Caco-2 (cell line): ENCODE measurements at regions of chr18 and their contacts with region 1.

Region 1: DNA sequence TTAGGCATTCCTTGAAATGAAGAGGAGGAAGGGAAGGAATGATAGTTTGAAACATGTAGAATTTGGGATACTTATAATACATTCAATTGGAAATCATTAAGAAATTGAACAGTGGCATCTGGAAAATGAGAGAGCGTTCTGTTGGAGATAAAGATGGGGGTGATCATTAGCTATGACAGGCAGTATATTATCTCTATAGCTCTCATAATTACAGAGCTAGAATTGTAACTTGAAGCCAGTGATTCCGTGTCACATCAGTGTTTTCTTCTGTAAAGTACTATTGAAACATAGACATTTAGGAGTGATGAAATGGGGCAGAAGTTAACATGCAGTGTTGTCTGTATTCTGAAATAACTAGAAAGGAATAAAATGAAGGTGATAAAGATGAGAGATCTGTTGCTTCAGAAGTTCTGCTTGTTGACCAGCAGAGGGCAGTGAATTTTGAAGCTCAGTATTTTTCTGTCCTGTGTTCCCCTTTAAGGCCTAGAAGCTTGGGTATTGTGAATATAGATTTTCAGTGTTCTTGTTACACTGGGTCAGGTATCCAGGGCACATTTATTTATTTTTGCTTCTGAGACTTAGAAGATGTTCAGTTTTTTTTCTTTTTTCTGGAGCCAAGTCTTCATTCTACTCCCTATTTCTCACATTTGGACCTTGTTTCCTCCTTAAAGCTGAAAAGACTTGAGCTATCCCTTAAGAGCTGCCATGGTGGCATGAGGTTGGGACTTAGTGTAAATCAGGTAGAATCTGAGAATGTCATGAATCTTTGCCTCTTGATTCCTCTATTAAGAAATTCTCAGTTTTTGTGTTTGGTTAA is 157.4 kb downstream of the TAF4B start:
- DNase-seq: peak in 1 of 2 experiments; percentile 12
- H3K4me3 ChIP-seq: no peak overlapping the region
- H3K4me3 Mint-ChIP-seq: no peak overlapping the region
- H3K27ac Mint-ChIP-seq: no peak overlapping the region
- H3K4me1 ChIP-seq: peaks cover 12% of the 10 kb centered on the region; the same call in 1 of the 2 replicates
- H3K4me1 Mint-ChIP-seq: no peaks in the 10 kb centered on the region
- H3K27me3 ChIP-seq: no peaks in the 10 kb centered on the region
- H3K27me3 Mint-ChIP-seq: no peaks in the 10 kb centered on the region
- CTCF ChIP-seq: peak; percentile 43 to 53

Region 2: GRCh38 chr18:26468931-26469340 is 85.3 kb after region 1 on chr18:
- CTCF ChIA-PET with region 1: no interaction called
- POLR2A ChIA-PET with region 1: no interaction called
- intact Hi-C with region 1: loop called (anchors 10 kb)
- DNase-seq: peak; percentile 62 to 64
- H3K4me3 ChIP-seq: no peak overlapping the region
- H3K4me3 Mint-ChIP-seq: no peak overlapping the region
- H3K27ac Mint-ChIP-seq: no peak overlapping the region
- H3K4me1 ChIP-seq: 0 out of 2 replicates have a peak, but pooled peaks cover 6% of the 10 kb centered on the region
- H3K4me1 Mint-ChIP-seq: peaks cover 23% of the 10 kb centered on the region
- H3K27me3 ChIP-seq: no peaks in the 10 kb centered on the region
- H3K27me3 Mint-ChIP-seq: no peaks in the 10 kb centered on the region
- CTCF ChIP-seq: peak; percentile 36 to 52

Region 3: GRCh38 chr18:26656944-26657536 is 273.4 kb after region 1 on chr18:
- CTCF ChIA-PET with region 1: no interaction called
- POLR2A ChIA-PET with region 1: no interaction called
- intact Hi-C with region 1: loop called (anchors 10 kb)
- DNase-seq: peak; percentile 36 to 57
- H3K4me3 ChIP-seq: peak overlapping the region; percentile 44
- H3K4me3 Mint-ChIP-seq: peak overlapping the region; percentile 85
- H3K27ac Mint-ChIP-seq: no peak overlapping the region
- H3K4me1 ChIP-seq: no peaks in the 10 kb centered on the region
- H3K4me1 Mint-ChIP-seq: no peaks in the 10 kb centered on the region
- H3K27me3 ChIP-seq: no peaks in the 10 kb centered on the region
- H3K27me3 Mint-ChIP-seq: peaks cover 11% of the 10 kb centered on the region
- CTCF ChIP-seq: no peak

Region 4: GRCh38 chr18:26700201-26700600 is 316.5 kb after region 1 on chr18:
- CTCF ChIA-PET with region 1: no interaction called
- POLR2A ChIA-PET with region 1: no interaction called
- intact Hi-C with region 1: no loop called
- DNase-seq: no peak
- H3K4me3 ChIP-seq: no peak overlapping the region
- H3K4me3 Mint-ChIP-seq: no peak overlapping the region
- H3K27ac Mint-ChIP-seq: no peak overlapping the region
- H3K4me1 ChIP-seq: no peaks in the 10 kb centered on the region
- H3K4me1 Mint-ChIP-seq: no peaks in the 10 kb centered on the region
- H3K27me3 ChIP-seq: no peaks in the 10 kb centered on the region
- H3K27me3 Mint-ChIP-seq: peaks cover 3% of the 10 kb centered on the region
- CTCF ChIP-seq: no peak